ENCODE measurements at regions of chr14 and their contacts with region 1.

Region 1: GRCh38 chr14:77067632-77068514 is 30.2 kb upstream of the CIPC start:
- DNase-seq: peak; percentile 73
- H3K4me3 Mint-ChIP-seq: no peak overlapping the region
- H3K27ac Mint-ChIP-seq: no peak overlapping the region
- H3K4me1 Mint-ChIP-seq: no peaks in the 10 kb centered on the region
- H3K27me3 Mint-ChIP-seq: no peaks in the 10 kb centered on the region

Region 2: GRCh38 chr14:76514613-76515012 is 553.3 kb before region 1 on chr14:
- CTCF ChIA-PET with region 1: no interaction called
- POLR2A ChIA-PET with region 1: no interaction called
- intact Hi-C with region 1: no loop called
- DNase-seq: peak; percentile 21
- H3K4me3 Mint-ChIP-seq: no peak overlapping the region
- H3K27ac Mint-ChIP-seq: no peak overlapping the region
- H3K4me1 Mint-ChIP-seq: no peaks in the 10 kb centered on the region
- H3K27me3 Mint-ChIP-seq: peaks cover 17% of the 10 kb centered on the region

Region 3: GRCh38 chr14:76710056-76711010 is 357.5 kb before region 1 on chr14:
- CTCF ChIA-PET with region 1: interaction called, 23 read pairs
- POLR2A ChIA-PET with region 1: no interaction called
- intact Hi-C with region 1: loop called (anchors 1 kb)
- DNase-seq: peak; percentile 20
- H3K4me3 Mint-ChIP-seq: no peak overlapping the region
- H3K27ac Mint-ChIP-seq: no peak overlapping the region
- H3K4me1 Mint-ChIP-seq: no peaks in the 10 kb centered on the region
- H3K27me3 Mint-ChIP-seq: peaks cover 16% of the 10 kb centered on the region

Region 4: GRCh38 chr14:76870166-76870565 is 197.7 kb before region 1 on chr14:
- CTCF ChIA-PET with region 1: interaction called, 598 read pairs
- POLR2A ChIA-PET with region 1: no interaction called
- intact Hi-C with region 1: loop called (anchors 1 kb)
- DNase-seq: no peak
- H3K4me3 Mint-ChIP-seq: no peak overlapping the region
- H3K27ac Mint-ChIP-seq: no peak overlapping the region
- H3K4me1 Mint-ChIP-seq: peaks cover 13% of the 10 kb centered on the region
- H3K27me3 Mint-ChIP-seq: peaks cover 2% of the 10 kb centered on the region

Region 5: GRCh38 chr14:76904740-76905438 is 163.0 kb before region 1 on chr14:
- CTCF ChIA-PET with region 1: interaction called, 146 read pairs
- POLR2A ChIA-PET with region 1: no interaction called
- intact Hi-C with region 1: no loop called
- DNase-seq: peak; percentile 93
- H3K4me3 Mint-ChIP-seq: peak overlapping the region; percentile 14
- H3K27ac Mint-ChIP-seq: peak overlapping the region; percentile 70
- H3K4me1 Mint-ChIP-seq: peaks cover 28% of the 10 kb centered on the region
- H3K27me3 Mint-ChIP-seq: no peaks in the 10 kb centered on the region

Region 6: DNA sequence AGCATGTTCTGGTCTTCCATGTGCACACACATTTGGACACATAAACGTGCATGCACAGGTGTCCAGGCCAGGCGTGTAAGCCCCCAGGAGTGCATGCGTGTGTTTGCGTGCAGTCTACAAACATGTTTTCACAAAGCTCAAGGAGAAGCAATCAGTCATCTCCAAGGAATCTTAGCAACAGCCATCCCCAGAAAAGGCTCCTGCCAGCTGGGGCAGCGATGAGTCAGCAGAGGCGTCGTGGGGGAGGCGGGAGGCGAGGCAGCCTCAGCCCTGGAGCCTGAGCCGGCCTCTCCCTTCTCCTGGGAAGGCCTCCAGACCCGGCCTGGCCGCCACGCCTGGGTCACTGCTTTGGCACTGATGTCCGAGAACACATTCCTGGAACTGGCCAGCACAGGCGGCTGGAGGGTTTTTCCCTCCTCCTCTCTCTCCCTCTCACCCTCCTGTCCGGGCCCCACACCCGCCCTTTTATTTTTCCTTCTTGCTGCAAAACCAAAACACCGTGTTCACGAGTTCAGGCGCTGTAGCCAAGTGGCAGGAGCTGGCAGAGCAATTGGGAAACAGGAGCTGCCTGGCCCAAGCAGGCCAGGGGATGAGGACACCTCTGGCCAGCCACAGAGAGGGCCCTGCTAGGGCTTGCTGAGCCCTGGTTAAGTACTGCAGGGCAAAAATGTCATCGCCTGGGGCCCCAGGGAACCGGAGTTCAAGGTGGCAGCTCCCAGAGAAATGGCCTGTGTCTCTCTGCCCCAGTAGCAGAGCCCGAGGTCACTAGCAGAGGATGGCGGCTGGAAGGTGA is 148.9 kb before region 1 on chr14:
- CTCF ChIA-PET with region 1: interaction called, 146 read pairs
- POLR2A ChIA-PET with region 1: no interaction called
- intact Hi-C with region 1: no loop called
- DNase-seq: peak; percentile 31
- H3K4me3 Mint-ChIP-seq: no peak overlapping the region
- H3K27ac Mint-ChIP-seq: no peak overlapping the region
- H3K4me1 Mint-ChIP-seq: peaks cover 33% of the 10 kb centered on the region
- H3K27me3 Mint-ChIP-seq: no peaks in the 10 kb centered on the region

Region 7: GRCh38 chr14:77040059-77040740 is 27.7 kb before region 1 on chr14:
- CTCF ChIA-PET with region 1: interaction called, 25 read pairs
- POLR2A ChIA-PET with region 1: no interaction called
- intact Hi-C with region 1: no loop called
- DNase-seq: peak; percentile 97
- H3K4me3 Mint-ChIP-seq: peak overlapping the region; percentile 77
- H3K27ac Mint-ChIP-seq: peak overlapping the region; percentile 99
- H3K4me1 Mint-ChIP-seq: peaks cover 88% of the 10 kb centered on the region
- H3K27me3 Mint-ChIP-seq: no peaks in the 10 kb centered on the region

Region 8: GRCh38 chr14:77086017-77086736 is 18.3 kb after region 1 on chr14:
- CTCF ChIA-PET with region 1: interaction called, 103 read pairs
- POLR2A ChIA-PET with region 1: no interaction called
- intact Hi-C with region 1: no loop called
- DNase-seq: no peak
- H3K4me3 Mint-ChIP-seq: no peak overlapping the region
- H3K27ac Mint-ChIP-seq: no peak overlapping the region
- H3K4me1 Mint-ChIP-seq: peaks cover 8% of the 10 kb centered on the region
- H3K27me3 Mint-ChIP-seq: peaks cover under 1% of the 10 kb centered on the region

Region 9: DNA sequence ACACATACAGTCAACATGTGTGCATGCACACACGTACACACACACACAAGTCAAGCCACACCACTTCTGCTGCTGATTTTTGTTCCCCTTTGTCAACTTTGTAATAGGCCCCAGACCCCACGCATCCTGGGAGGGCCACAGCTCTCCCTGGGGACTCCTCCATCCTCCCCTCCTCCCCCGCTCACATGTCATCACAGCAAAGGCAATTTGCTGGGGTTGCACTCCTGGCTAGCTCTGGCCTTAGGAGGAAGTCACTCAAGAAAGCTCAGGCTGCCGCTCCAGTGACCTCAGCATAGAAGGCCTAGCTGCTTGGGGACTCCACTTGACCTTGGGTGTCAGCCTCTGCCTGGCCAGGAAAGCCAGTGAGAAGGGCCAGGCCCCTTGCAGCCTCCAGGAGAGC is 176.0 kb after region 1 on chr14:
- CTCF ChIA-PET with region 1: no interaction called
- POLR2A ChIA-PET with region 1: no interaction called
- intact Hi-C with region 1: no loop called
- DNase-seq: no peak
- H3K4me3 Mint-ChIP-seq: no peak overlapping the region
- H3K27ac Mint-ChIP-seq: no peak overlapping the region
- H3K4me1 Mint-ChIP-seq: no peaks in the 10 kb centered on the region
- H3K27me3 Mint-ChIP-seq: peaks cover 2% of the 10 kb centered on the region